ENCODE measurements at regions of chr22 and their contacts with region 1.

Region 1: DNA sequence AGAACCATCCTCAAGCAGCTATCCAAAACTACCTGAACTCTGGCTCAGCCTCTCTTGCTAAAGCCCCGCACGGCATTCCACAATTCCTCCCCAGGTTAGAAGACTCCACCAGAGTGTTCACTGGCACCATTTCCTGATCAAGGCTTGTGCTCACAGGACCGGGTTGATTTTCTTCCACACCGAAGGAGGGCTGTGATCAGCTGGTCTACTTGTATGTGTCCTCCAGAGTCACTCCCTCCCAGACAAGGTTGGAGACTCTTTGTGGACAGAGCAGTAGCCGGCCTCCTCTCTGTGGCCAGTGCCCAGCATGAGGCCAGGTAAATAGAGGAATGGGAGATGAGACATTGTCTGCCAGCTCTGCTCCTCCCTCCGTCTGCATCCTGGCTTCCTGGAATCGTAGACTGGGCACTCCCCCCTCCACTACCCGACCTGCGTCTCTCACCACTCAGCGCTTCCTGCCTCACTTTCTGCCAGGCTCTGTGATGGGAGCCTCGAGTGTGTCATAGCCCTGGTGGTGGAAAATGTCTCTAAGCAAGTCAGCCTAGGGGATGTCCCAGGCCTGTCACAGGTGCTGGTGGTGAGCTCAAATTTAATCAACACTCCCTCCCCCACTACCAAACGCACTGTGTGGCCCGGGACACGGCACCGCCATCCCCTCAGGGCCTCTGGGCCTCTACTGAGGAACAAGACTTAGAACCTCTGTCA is 12.5 kb upstream of the TMPRSS6 start:
- DNase-seq: peak; percentile 97
- ATAC-seq: peak; percentile 93
- H3K4me3 Mint-ChIP-seq: peak overlapping the region; percentile 87
- H3K27ac Mint-ChIP-seq: peak overlapping the region; percentile 100
- H3K4me1 Mint-ChIP-seq: peaks cover 86% of the 10 kb centered on the region
- H3K27me3 Mint-ChIP-seq: no peaks in the 10 kb centered on the region
- CTCF ChIP-seq: no peak

Region 2: GRCh38 chr22:36966851-36967540 is 155.0 kb before region 1 on chr22:
- CTCF ChIA-PET with region 1: no interaction called
- POLR2A ChIA-PET with region 1: no interaction called
- intact Hi-C with region 1: no loop called
- DNase-seq: no peak
- ATAC-seq: no peak
- H3K4me3 Mint-ChIP-seq: no peak overlapping the region
- H3K27ac Mint-ChIP-seq: no peak overlapping the region
- H3K4me1 Mint-ChIP-seq: no peaks in the 10 kb centered on the region
- H3K27me3 Mint-ChIP-seq: no peaks in the 10 kb centered on the region
- CTCF ChIP-seq: no peak

Region 3: DNA sequence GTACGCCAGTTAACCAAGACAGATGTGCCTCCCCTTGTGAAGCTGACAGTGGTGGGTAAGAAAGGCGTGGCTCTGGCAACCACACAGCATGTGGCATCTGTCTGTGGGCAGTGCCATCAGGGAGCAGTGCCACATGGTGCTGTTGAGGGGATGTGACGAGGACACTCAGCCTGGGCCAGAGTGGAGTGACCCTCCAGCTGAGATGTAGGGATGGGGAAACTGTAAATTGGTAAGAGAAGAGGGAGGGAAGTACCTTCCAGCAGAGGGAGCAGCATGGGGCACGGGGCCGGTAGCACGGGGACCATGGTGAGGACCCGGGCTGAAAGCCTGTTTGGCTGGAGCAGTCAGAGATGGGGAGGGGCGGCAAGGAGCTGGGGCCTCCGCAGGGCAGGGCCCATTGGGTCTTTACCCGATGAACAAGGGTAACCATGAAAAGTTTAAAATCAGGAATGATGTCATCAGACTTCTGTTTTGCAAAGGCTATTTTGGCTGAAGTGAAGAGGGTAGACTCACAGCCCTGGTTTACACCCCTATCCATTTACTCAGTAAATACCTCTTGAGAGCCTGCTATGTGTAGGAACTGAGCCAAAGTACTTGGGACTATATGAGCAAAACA is 23.0 kb before region 1 on chr22:
- CTCF ChIA-PET with region 1: interaction called, 9 read pairs
- POLR2A ChIA-PET with region 1: interaction called, 11 read pairs
- intact Hi-C with region 1: no loop called
- DNase-seq: peak; percentile 17
- ATAC-seq: no peak
- H3K4me3 Mint-ChIP-seq: no peak overlapping the region
- H3K27ac Mint-ChIP-seq: peak overlapping the region; percentile 68
- H3K4me1 Mint-ChIP-seq: peaks cover 49% of the 10 kb centered on the region
- H3K27me3 Mint-ChIP-seq: peaks cover 9% of the 10 kb centered on the region
- CTCF ChIP-seq: peak; percentile 36

Region 4: GRCh38 chr22:37139762-37140161 is 17.7 kb after region 1 on chr22:
- CTCF ChIA-PET with region 1: interaction called, 15 read pairs
- POLR2A ChIA-PET with region 1: interaction called, 321 read pairs
- intact Hi-C with region 1: no loop called
- DNase-seq: no peak
- ATAC-seq: peak; percentile 25
- H3K4me3 Mint-ChIP-seq: no peak overlapping the region
- H3K27ac Mint-ChIP-seq: peak overlapping the region; percentile 92
- H3K4me1 Mint-ChIP-seq: peaks cover 76% of the 10 kb centered on the region
- H3K27me3 Mint-ChIP-seq: no peaks in the 10 kb centered on the region
- CTCF ChIP-seq: no peak

Region 5: DNA sequence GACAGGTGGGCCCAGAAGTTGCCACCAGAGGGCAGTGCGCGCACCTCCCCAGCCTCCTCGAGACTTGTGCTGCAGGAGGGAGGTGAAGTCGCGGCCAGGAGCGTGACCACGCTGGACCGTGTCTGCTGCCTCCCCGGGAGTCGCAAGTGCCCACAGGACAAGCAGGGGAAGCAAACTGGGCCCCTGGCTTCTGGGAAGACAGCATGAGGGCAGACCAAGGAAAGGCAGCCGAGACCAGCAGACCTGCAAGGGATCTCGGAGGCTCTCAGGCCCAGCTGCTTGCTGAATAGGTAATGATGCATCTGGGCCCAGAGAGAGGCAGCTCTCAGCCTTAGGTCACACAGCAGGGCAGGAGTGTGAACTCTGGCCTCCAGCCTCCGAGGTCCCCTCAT is 44.6 kb after region 1 on chr22:
- CTCF ChIA-PET with region 1: interaction called, 23 read pairs
- POLR2A ChIA-PET with region 1: interaction called, 31 read pairs
- intact Hi-C with region 1: no loop called
- DNase-seq: peak; percentile 93
- ATAC-seq: peak; percentile 18
- H3K4me3 Mint-ChIP-seq: peak overlapping the region; percentile 72
- H3K27ac Mint-ChIP-seq: peak overlapping the region; percentile 73
- H3K4me1 Mint-ChIP-seq: peaks cover 93% of the 10 kb centered on the region
- H3K27me3 Mint-ChIP-seq: no peaks in the 10 kb centered on the region
- CTCF ChIP-seq: peak; percentile 87

Measured in activated CD8-positive, alpha-beta T cell treated with anti-CD3 and anti-CD28 coated beads for 36 hours (primary cell).